Caco-2 (cell line): ENCODE measurements at regions of chr1 and their contacts with region 1.

Region 1: DNA sequence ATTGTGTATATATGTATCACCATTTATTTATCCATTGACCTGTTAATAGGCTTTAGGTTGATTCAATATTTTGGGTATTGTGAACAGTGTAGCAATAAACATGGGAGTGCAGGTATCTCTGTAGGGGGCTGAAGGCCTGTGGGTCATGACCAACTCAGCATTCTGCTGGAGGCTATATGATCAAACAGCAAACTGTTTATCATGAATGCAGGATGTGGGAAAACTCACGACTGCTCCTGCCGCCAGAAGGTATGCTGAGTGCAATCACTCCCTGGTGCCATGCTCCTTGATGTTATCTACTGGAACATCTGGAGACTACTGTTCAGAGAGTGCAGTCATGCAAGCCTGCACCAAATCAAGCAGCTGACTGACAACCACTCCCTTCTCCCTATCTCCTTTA is 275.2 kb downstream of the COL11A1 start:
- DNase-seq: peak in 1 of 2 experiments; percentile 44
- H3K4me3 ChIP-seq: no peak overlapping the region
- H3K4me3 Mint-ChIP-seq: no peak overlapping the region
- H3K27ac Mint-ChIP-seq: no peak overlapping the region
- H3K4me1 ChIP-seq: peaks cover 15% of the 10 kb centered on the region
- H3K4me1 Mint-ChIP-seq: peaks cover 13% of the 10 kb centered on the region
- H3K27me3 ChIP-seq: no peaks in the 10 kb centered on the region
- H3K27me3 Mint-ChIP-seq: peaks cover 2% of the 10 kb centered on the region
- CTCF ChIP-seq: no peak

Region 2: DNA sequence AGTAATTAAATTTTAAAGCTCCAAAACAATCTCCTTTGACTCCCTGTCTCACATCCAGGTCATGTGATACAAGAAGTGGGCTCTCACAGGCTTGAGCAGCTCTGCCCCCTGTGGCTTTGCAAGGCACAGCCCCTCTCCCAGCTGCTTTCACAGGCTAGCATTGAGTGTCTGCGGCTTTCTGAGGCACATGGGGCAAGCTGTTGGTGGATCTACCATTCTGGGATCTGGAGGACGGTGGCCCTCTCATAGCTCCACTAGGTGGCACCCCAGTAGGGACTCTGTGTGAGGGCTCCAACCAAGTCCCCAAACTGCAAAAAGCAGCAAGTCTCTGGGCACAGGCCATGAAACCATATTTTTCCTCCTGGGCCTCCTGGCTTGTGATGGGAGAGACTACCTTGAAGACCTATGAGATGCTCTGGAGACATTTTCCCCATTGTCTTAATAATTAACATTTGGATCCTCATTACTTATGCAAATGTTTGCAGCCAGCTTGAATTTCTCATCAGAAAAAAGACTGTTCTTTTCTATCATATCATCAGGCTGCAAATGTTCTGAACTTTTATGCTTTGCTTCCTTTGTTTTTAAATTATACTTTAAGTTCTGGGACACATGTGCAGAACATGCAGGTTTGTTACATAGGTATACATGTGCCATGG is 282.3 kb before region 1 on chr1:
- CTCF ChIA-PET with region 1: no interaction called
- POLR2A ChIA-PET with region 1: no interaction called
- intact Hi-C with region 1: no loop called
- DNase-seq: peak; percentile 15 to 43
- H3K4me3 ChIP-seq: no peak overlapping the region
- H3K4me3 Mint-ChIP-seq: no peak overlapping the region
- H3K27ac Mint-ChIP-seq: no peak overlapping the region
- H3K4me1 ChIP-seq: no peaks in the 10 kb centered on the region
- H3K4me1 Mint-ChIP-seq: no peaks in the 10 kb centered on the region
- H3K27me3 ChIP-seq: no peaks in the 10 kb centered on the region
- H3K27me3 Mint-ChIP-seq: no peaks in the 10 kb centered on the region
- CTCF ChIP-seq: peak in 1 of 2 experiments; percentile 14

Region 3: DNA sequence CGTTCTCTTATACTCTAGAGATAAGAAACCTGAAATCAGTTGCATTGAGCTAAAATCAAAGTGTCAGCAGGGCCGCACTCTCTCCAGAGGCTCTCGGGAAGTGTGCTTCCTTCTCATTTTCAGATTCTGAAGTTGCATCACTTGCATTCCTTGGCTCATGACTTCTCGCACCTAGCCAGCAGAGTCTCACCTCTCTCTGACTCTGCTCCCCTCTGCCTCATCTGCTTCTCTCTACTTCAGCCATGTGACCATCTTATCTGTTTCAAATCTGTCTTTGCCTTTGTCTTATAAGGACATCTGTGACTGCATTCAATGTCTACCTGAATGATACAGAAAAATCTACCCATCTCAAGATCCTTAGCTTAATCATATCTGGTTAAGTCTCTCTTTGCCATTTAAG is 181.1 kb before region 1 on chr1:
- CTCF ChIA-PET with region 1: no interaction called
- POLR2A ChIA-PET with region 1: no interaction called
- intact Hi-C with region 1: loop called (anchors 2 kb)
- DNase-seq: no peak
- H3K4me3 ChIP-seq: no peak overlapping the region
- H3K4me3 Mint-ChIP-seq: no peak overlapping the region
- H3K27ac Mint-ChIP-seq: no peak overlapping the region
- H3K4me1 ChIP-seq: no peaks in the 10 kb centered on the region
- H3K4me1 Mint-ChIP-seq: no peaks in the 10 kb centered on the region
- H3K27me3 ChIP-seq: no peaks in the 10 kb centered on the region
- H3K27me3 Mint-ChIP-seq: no peaks in the 10 kb centered on the region
- CTCF ChIP-seq: no peak

Region 4: GRCh38 chr1:102858695-102859094 is 25.5 kb after region 1 on chr1:
- CTCF ChIA-PET with region 1: no interaction called
- POLR2A ChIA-PET with region 1: no interaction called
- intact Hi-C with region 1: loop called (anchors 1 kb)
- DNase-seq: peak; percentile 9 to 70
- H3K4me3 ChIP-seq: no peak overlapping the region
- H3K4me3 Mint-ChIP-seq: peak overlapping the region; percentile 33
- H3K27ac Mint-ChIP-seq: no peak overlapping the region
- H3K4me1 ChIP-seq: peaks cover 27% of the 10 kb centered on the region
- H3K4me1 Mint-ChIP-seq: peaks cover 12% of the 10 kb centered on the region
- H3K27me3 ChIP-seq: no peaks in the 10 kb centered on the region
- H3K27me3 Mint-ChIP-seq: no peaks in the 10 kb centered on the region
- CTCF ChIP-seq: no peak